OCI-LY7 (cell line): ENCODE measurements at regions of chr6 and their contacts with region 1.

Region 1: GRCh38 chr6:7919880-7920279 is 9.3 kb upstream of the TXNDC5 start:
- DNase-seq: no peak
- H3K4me3 ChIP-seq: no peak overlapping the region
- H3K27ac ChIP-seq: no peak overlapping the region
- H3K4me1 ChIP-seq: peaks cover 65% of the 10 kb centered on the region
- CTCF ChIP-seq: no peak

Region 2: GRCh38 chr6:7899101-7899888 is 20.6 kb before region 1 on chr6:
- CTCF ChIA-PET with region 1: interaction called, 3 read pairs
- POLR2A ChIA-PET with region 1: interaction called, 39 read pairs
- intact Hi-C with region 1: no loop called
- DNase-seq: peak; percentile 59
- H3K4me3 ChIP-seq: no peak overlapping the region
- H3K27ac ChIP-seq: peak overlapping the region; percentile 78
- H3K4me1 ChIP-seq: peaks cover 65% of the 10 kb centered on the region
- CTCF ChIP-seq: peak; percentile 76

Region 3: DNA sequence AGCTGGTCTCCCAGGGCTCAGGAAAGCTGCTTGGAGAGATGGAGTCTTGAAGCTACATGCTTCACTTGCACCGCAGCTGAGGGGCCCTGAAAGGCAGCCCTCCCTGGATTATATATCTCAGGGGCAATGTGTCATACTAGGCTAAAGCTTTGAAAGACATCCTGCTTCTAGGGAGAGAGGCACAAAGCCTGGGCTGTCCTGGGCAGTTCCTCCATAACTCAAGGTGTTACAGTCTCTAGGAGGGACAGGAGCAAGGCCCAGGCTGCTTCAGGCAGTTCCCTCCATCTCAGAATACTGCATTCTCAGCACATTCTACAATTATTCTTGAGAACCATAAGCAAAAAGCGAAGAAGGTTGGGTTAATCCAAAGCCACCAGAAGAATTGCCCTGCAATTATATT is 12.7 kb after region 1 on chr6:
- CTCF ChIA-PET with region 1: interaction called, 4 read pairs
- POLR2A ChIA-PET with region 1: interaction called, 58 read pairs
- intact Hi-C with region 1: no loop called
- DNase-seq: no peak
- H3K4me3 ChIP-seq: no peak overlapping the region
- H3K27ac ChIP-seq: no peak overlapping the region
- H3K4me1 ChIP-seq: peaks cover 9% of the 10 kb centered on the region
- CTCF ChIP-seq: no peak

Region 4: GRCh38 chr6:7960848-7961247 is 41.0 kb after region 1 on chr6:
- CTCF ChIA-PET with region 1: interaction called, 5 read pairs
- POLR2A ChIA-PET with region 1: interaction called, 55 read pairs
- intact Hi-C with region 1: loop called (anchors 1 kb)
- DNase-seq: no peak
- H3K4me3 ChIP-seq: no peak overlapping the region
- H3K27ac ChIP-seq: no peak overlapping the region
- H3K4me1 ChIP-seq: peaks cover 25% of the 10 kb centered on the region
- CTCF ChIP-seq: no peak

Region 5: DNA sequence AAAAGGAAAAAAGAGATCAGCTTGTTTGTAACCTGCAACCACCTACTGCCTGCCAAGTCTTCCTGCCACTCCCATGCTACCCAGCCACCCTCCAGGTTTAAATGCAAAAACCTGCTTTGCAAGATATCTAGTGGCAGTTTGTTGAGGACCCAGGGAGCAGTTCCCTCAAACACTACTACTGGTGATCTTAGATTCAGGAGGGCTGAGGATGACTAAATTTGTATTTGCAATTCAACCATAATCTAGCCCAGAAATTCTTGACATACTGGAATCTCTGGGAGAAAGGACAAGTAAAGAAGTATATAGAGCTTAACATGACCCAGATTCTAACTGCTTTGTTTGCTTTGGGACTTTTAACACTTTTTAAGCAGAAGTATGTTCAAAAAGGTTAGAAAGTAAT is 49.5 kb after region 1 on chr6:
- CTCF ChIA-PET with region 1: no interaction called
- POLR2A ChIA-PET with region 1: interaction called, 55 read pairs
- intact Hi-C with region 1: no loop called
- DNase-seq: no peak
- H3K4me3 ChIP-seq: no peak overlapping the region
- H3K27ac ChIP-seq: no peak overlapping the region
- H3K4me1 ChIP-seq: peaks cover 10% of the 10 kb centered on the region
- CTCF ChIP-seq: no peak